Activated CD4-positive, alpha-beta T cell treated with anti-CD3 and anti-CD28 coated beads for 36 hours (primary cell): ENCODE measurements at regions of chr2 and their contacts with region 1.

Region 1: GRCh38 chr2:157194097-157194688 is 63.3 kb upstream of the GALNT5 start:
- DNase-seq: peak; percentile 21
- ATAC-seq: peak; percentile 63
- H3K4me3 Mint-ChIP-seq: no peak overlapping the region
- H3K27ac Mint-ChIP-seq: no peak overlapping the region
- H3K4me1 Mint-ChIP-seq: no peaks in the 10 kb centered on the region
- H3K27me3 Mint-ChIP-seq: peaks cover 2% of the 10 kb centered on the region

Region 2: DNA sequence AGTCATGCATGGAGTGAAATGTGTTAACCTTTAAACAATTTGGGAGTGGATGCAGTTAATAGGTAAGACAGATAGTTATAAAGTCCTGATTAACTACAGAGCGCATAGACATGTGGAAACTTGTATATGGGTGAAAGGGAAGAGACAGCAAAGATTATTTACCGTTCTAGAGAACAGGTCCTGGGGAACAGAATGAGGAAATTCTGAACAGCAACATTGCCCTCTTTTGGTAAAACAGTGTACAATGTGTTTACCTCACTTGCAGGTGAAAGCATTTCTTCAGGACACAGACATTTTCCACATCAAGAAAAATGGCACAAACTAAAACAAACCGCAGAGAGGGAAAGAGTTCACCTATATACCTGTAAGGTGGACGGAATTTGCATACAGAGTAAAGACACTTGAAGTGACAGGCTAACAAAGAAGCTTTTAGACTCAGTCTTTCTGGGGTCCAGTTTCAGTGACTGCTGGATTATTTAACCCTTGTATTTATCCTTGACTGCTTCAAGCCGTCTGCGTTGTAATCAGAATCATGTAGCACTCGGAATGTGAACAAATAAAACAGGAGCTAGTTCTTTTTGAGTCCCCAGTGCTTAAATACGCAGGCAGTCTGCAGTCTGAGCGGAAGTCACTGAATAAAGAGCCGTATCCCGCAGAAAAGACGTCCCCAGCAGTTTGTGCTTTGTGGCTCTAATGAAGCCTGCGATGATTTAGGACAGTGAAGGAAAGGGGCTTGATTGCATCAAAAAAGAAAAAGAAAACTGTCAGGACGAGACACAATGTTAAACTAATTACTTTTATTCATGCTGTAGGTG is 301.5 kb before region 1 on chr2:
- CTCF ChIA-PET with region 1: interaction called, 3 read pairs
- POLR2A ChIA-PET with region 1: no interaction called
- intact Hi-C with region 1: loop called in 1 of 2 experiments (anchors 2 kb)
- DNase-seq: no peak
- ATAC-seq: peak; percentile 58
- H3K4me3 Mint-ChIP-seq: no peak overlapping the region
- H3K27ac Mint-ChIP-seq: no peak overlapping the region
- H3K4me1 Mint-ChIP-seq: peaks cover 10% of the 10 kb centered on the region
- H3K27me3 Mint-ChIP-seq: peaks cover 30% of the 10 kb centered on the region

Region 3: GRCh38 chr2:157182834-157183396 is 11.3 kb before region 1 on chr2:
- CTCF ChIA-PET with region 1: interaction called, 10 read pairs
- POLR2A ChIA-PET with region 1: no interaction called
- intact Hi-C with region 1: no loop called
- DNase-seq: no peak
- ATAC-seq: peak; percentile 65
- H3K4me3 Mint-ChIP-seq: no peak overlapping the region
- H3K27ac Mint-ChIP-seq: no peak overlapping the region
- H3K4me1 Mint-ChIP-seq: peaks cover 11% of the 10 kb centered on the region
- H3K27me3 Mint-ChIP-seq: peaks cover 3% of the 10 kb centered on the region

Region 4: GRCh38 chr2:157204401-157204800 is 10.2 kb after region 1 on chr2:
- CTCF ChIA-PET with region 1: no interaction called
- POLR2A ChIA-PET with region 1: no interaction called
- intact Hi-C with region 1: no loop called
- DNase-seq: no peak
- ATAC-seq: no peak
- H3K4me3 Mint-ChIP-seq: no peak overlapping the region
- H3K27ac Mint-ChIP-seq: no peak overlapping the region
- H3K4me1 Mint-ChIP-seq: no peaks in the 10 kb centered on the region
- H3K27me3 Mint-ChIP-seq: peaks cover 2% of the 10 kb centered on the region

Region 5: DNA sequence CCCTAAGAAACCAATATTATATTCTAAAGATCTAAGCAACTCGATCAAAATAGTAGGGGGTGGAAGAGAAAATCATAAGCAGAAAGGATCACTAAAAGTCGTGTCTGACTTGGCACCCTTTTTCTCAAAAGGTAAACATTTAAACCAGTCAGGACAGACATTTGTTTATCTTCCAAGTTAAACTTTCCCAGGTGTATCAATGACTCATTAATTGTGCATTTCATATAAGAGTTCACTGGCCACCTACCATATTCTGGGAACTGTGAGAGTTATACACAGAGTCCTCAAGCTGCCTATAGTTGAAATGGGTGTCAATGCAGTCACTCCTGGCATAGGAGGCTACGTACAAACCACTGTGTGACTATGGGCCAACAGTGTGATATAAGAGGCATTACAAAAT is 686.7 kb after region 1 on chr2:
- CTCF ChIA-PET with region 1: no interaction called
- POLR2A ChIA-PET with region 1: no interaction called
- intact Hi-C with region 1: no loop called
- DNase-seq: no peak
- ATAC-seq: no peak
- H3K4me3 Mint-ChIP-seq: no peak overlapping the region
- H3K27ac Mint-ChIP-seq: no peak overlapping the region
- H3K4me1 Mint-ChIP-seq: peaks cover 18% of the 10 kb centered on the region
- H3K27me3 Mint-ChIP-seq: no peaks in the 10 kb centered on the region